ENCODE measurements at regions of chr6 and their contacts with region 1.

Region 1: GRCh38 chr6:104239971-104240370 is 619.7 kb downstream of the HACE1 start:
- DNase-seq: peak; percentile 69 to 72
- H3K4me3 ChIP-seq: no peak overlapping the region
- H3K4me3 Mint-ChIP-seq: no peak overlapping the region
- H3K27ac Mint-ChIP-seq: peak overlapping the region; percentile 72
- H3K4me1 ChIP-seq: peaks cover 35% of the 10 kb centered on the region
- H3K4me1 Mint-ChIP-seq: peaks cover 18% of the 10 kb centered on the region
- H3K27me3 ChIP-seq: no peaks in the 10 kb centered on the region
- H3K27me3 Mint-ChIP-seq: no peaks in the 10 kb centered on the region
- CTCF ChIP-seq: no peak

Region 2: GRCh38 chr6:104256646-104257045 is 16.7 kb after region 1 on chr6:
- CTCF ChIA-PET with region 1: no interaction called
- POLR2A ChIA-PET with region 1: no interaction called
- intact Hi-C with region 1: loop called (anchors 1 kb)
- DNase-seq: no peak
- H3K4me3 ChIP-seq: no peak overlapping the region
- H3K4me3 Mint-ChIP-seq: no peak overlapping the region
- H3K27ac Mint-ChIP-seq: no peak overlapping the region
- H3K4me1 ChIP-seq: peaks cover 42% of the 10 kb centered on the region
- H3K4me1 Mint-ChIP-seq: peaks cover 26% of the 10 kb centered on the region
- H3K27me3 ChIP-seq: no peaks in the 10 kb centered on the region
- H3K27me3 Mint-ChIP-seq: no peaks in the 10 kb centered on the region
- CTCF ChIP-seq: no peak

Region 3: DNA sequence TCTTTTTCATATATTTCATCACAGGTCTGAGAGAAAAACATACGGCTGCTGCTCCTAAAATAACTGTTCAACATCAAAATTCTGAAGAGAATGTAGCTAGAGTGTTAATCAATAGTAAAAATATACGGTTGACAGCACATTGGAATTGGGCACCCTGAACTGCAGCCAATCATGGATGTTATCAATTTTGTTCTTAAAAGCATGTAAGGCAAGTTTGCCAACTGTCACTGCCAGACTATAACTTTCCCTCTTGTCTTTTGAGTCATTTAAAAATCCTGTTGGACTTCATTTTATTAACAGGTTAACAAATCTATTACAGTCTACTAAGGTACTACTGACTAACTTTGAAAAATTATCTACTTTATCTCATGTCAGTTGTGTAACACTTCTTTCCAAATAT is 27.0 kb after region 1 on chr6:
- CTCF ChIA-PET with region 1: no interaction called
- POLR2A ChIA-PET with region 1: no interaction called
- intact Hi-C with region 1: loop called (anchors 1 kb)
- DNase-seq: peak in 1 of 2 experiments; percentile 10
- H3K4me3 ChIP-seq: no peak overlapping the region
- H3K4me3 Mint-ChIP-seq: no peak overlapping the region
- H3K27ac Mint-ChIP-seq: no peak overlapping the region
- H3K4me1 ChIP-seq: peaks cover 30% of the 10 kb centered on the region
- H3K4me1 Mint-ChIP-seq: peaks cover 17% of the 10 kb centered on the region
- H3K27me3 ChIP-seq: no peaks in the 10 kb centered on the region
- H3K27me3 Mint-ChIP-seq: no peaks in the 10 kb centered on the region
- CTCF ChIP-seq: no peak

Measured in Caco-2 (cell line).